ENCODE measurements at regions of chr19 and their contacts with region 1.

Region 1: GRCh38 chr19:36054119-36054732 is at the start of gene THAP8:
- DNase-seq: peak; percentile 100
- H3K4me3 ChIP-seq: peak within 1 kb of the TSS; percentile 53 to 83 (median 76)
- H3K27ac ChIP-seq: peak within 1 kb of the TSS; percentile 94 to 99 (median 98)
- H3K4me1 ChIP-seq: peaks cover 7 to 18% (median 10%) of the 10 kb centered on the region in 4 donors
- H3K27me3 ChIP-seq: no peaks in the 10 kb centered on the region
- CTCF ChIP-seq: peak; percentile 45 to 85 (median 62)
- EP300 ChIP-seq: no peak
- POLR2A ChIP-seq: peak; percentile 80
- total RNA-seq, gene THAP8: 9.5 to 64.1 (median 11.2) TPM in 3 of 4 donors, not detected in the other

Region 2: GRCh38 chr19:35995048-35995993 is 58.9 kb before region 1 on chr19 and contains the start of gene SDHAF1:
- in situ Hi-C with region 1: loop called in 1 of 4 experiments (anchors 10 kb)
- intact Hi-C with region 1: loop called (anchors 5 kb)
- DNase-seq: peak; percentile 98
- H3K4me3 ChIP-seq: peak within 1 kb of the TSS; percentile 72 to 84 (median 80)
- H3K27ac ChIP-seq: peak within 1 kb of the TSS; percentile 88 to 92 (median 90)
- H3K4me1 ChIP-seq: peaks cover 20 to 35% (median 33%) of the 10 kb centered on the region in 4 donors
- H3K27me3 ChIP-seq: no peaks in the 10 kb centered on the region
- CTCF ChIP-seq: no peak
- EP300 ChIP-seq: no peak
- POLR2A ChIP-seq: peak; percentile 88
- total RNA-seq, gene SDHAF1: 30.3 to 83.8 (median 55.4) TPM

Region 3: DNA sequence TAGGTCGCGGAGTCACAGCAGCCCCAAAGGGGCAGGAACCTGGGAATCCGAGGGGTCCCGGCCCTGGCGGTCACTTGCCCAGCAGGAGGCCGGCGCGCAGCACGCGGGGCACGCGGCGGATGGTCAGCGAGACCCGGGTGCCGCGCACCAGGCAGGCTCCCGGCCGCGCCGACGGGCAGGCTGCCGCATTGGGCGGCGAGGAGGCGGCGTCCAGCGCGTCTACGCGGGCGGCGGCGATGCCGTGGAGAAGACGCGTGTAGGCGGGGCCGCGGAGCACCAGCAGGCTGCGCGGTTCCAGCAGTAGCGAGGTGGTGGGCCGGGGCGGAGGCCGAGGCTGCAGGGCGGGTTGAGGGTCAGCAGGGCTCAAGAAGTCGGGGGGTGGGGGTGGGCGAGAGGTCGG is 45.0 kb before region 1 on chr19:
- in situ Hi-C with region 1: loop called in 1 of 4 experiments (anchors 10 kb)
- intact Hi-C with region 1: no loop called
- DNase-seq: peak; percentile 76
- H3K4me3 ChIP-seq: peak overlapping the region; percentile 13 to 40 (median 37)
- H3K27ac ChIP-seq: peak overlapping the region; percentile 19 to 85 (median 72)
- H3K4me1 ChIP-seq: peaks cover 10 to 22% (median 17%) of the 10 kb centered on the region in 4 donors
- H3K27me3 ChIP-seq: no peaks in the 10 kb centered on the region
- CTCF ChIP-seq: no peak
- EP300 ChIP-seq: no peak
- POLR2A ChIP-seq: no peak

Region 4: GRCh38 chr19:36172852-36173251 is 118.6 kb after region 1 on chr19:
- in situ Hi-C with region 1: no loop called
- intact Hi-C with region 1: no loop called
- DNase-seq: no peak
- H3K4me3 ChIP-seq: no peak overlapping the region
- H3K27ac ChIP-seq: no peak overlapping the region
- H3K4me1 ChIP-seq: peaks cover 0 to 21% (median 16%) of the 10 kb centered on the region in 4 donors
- H3K27me3 ChIP-seq: no peaks in the 10 kb centered on the region
- CTCF ChIP-seq: no peak
- EP300 ChIP-seq: no peak
- POLR2A ChIP-seq: no peak

Measured in transverse colon (tissue), 4 donors.